Activated B cell treated with CpG ODN at 0.5 μM for 24 hours (primary cell): ENCODE measurements at regions of chr1 and their contacts with region 1.

Region 1: DNA sequence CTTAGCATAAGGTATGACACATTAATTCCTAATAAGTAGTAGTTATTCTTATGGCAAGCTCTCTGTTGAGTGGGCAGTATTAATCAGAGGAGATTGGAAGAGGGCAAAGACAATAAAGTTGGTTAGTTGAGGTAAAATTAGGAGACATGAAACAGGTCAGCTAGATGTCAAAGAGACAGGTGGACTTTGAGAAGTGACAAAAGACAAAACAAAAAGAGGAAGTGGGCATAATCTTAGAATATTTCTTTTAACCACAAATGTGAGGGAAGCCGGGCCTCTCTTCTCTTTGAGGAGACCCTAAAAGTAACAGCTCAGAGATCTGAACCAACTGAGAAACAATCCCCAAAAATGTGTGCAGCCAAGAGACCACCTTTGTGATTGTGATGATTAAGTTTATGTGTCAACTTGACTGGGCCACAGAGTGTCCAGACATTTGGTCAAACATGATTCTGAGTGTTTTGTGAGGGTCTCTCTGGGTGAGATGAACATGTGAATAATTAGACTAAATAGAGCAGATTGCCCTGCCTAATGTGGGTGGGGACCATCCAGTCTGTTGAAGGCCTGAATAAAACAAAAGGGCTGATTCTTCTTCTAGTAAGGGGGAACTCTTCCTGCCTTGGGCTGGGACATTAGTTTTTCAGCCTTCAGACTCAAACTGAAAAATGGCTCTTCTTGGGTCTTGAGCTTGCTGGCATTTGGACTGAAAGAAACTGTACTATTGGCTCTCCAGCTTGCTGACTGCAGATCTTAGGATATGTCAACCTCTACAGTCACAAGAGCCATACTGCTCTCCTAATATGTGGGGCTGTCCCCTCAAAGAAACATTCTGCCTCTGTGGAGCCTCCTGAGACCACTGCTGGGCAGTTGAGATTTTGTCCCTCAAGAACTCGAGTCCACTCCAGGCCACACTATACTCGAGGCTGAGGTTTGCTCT is 40.0 kb downstream of the FCRL5 start:
- DNase-seq: no peak
- ATAC-seq: peak; percentile 47
- H3K4me3 Mint-ChIP-seq: peak overlapping the region; percentile 7
- H3K27ac Mint-ChIP-seq: peak overlapping the region; percentile 38
- H3K4me1 Mint-ChIP-seq: peaks cover 57% of the 10 kb centered on the region
- H3K27me3 Mint-ChIP-seq: no peaks in the 10 kb centered on the region
- CTCF ChIP-seq: no peak

Region 2: GRCh38 chr1:157138220-157139051 is 373.9 kb before region 1 on chr1 and contains the start of gene ETV3:
- CTCF ChIA-PET with region 1: no interaction called
- POLR2A ChIA-PET with region 1: no interaction called
- intact Hi-C with region 1: no loop called
- DNase-seq: peak; percentile 72
- ATAC-seq: peak; percentile 86
- H3K4me3 Mint-ChIP-seq: peak within 1 kb of the TSS; percentile 94
- H3K27ac Mint-ChIP-seq: peak within 1 kb of the TSS; percentile 93
- H3K4me1 Mint-ChIP-seq: peaks cover 43% of the 10 kb centered on the region
- H3K27me3 Mint-ChIP-seq: no peaks in the 10 kb centered on the region
- CTCF ChIP-seq: no peak
- total RNA-seq, gene ETV3: 26.6 and 31.3 TPM in 2 replicates

Region 3: DNA sequence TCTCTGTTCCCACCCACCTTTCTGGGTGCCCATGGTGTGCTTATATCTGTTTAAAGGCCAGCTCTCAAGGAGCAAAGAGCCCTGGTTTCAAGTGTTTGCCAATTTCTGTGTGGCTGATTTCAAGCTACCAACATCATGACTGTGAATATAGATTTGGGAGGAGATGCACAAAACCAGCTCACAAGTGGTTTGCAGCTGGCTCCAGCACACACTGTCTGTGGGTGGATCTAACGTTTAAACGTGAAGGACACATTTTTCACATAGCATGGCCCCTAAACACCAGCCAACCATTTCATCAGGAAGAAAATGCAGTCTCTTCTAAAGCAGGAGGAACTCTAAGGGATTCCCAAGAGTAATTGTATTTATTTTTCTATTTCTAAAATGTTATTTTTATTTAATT is 25.2 kb before region 1 on chr1:
- CTCF ChIA-PET with region 1: no interaction called
- POLR2A ChIA-PET with region 1: no interaction called
- intact Hi-C with region 1: no loop called
- DNase-seq: no peak
- ATAC-seq: no peak
- H3K4me3 Mint-ChIP-seq: no peak overlapping the region
- H3K27ac Mint-ChIP-seq: no peak overlapping the region
- H3K4me1 Mint-ChIP-seq: peaks cover 3% of the 10 kb centered on the region
- H3K27me3 Mint-ChIP-seq: no peaks in the 10 kb centered on the region
- CTCF ChIP-seq: no peak

Region 4: GRCh38 chr1:157523774-157524493 is 11.6 kb after region 1 on chr1:
- CTCF ChIA-PET with region 1: no interaction called
- POLR2A ChIA-PET with region 1: no interaction called
- intact Hi-C with region 1: no loop called
- DNase-seq: no peak
- ATAC-seq: no peak
- H3K4me3 Mint-ChIP-seq: peak overlapping the region; percentile 42
- H3K27ac Mint-ChIP-seq: peak overlapping the region; percentile 62
- H3K4me1 Mint-ChIP-seq: peaks cover 21% of the 10 kb centered on the region
- H3K27me3 Mint-ChIP-seq: no peaks in the 10 kb centered on the region
- CTCF ChIP-seq: no peak

Region 5: GRCh38 chr1:157540160-157540748 is 28.0 kb after region 1 on chr1:
- CTCF ChIA-PET with region 1: no interaction called
- POLR2A ChIA-PET with region 1: no interaction called
- intact Hi-C with region 1: no loop called
- DNase-seq: no peak
- ATAC-seq: no peak
- H3K4me3 Mint-ChIP-seq: peak overlapping the region; percentile 41
- H3K27ac Mint-ChIP-seq: peak overlapping the region; percentile 46
- H3K4me1 Mint-ChIP-seq: peaks cover 47% of the 10 kb centered on the region
- H3K27me3 Mint-ChIP-seq: no peaks in the 10 kb centered on the region
- CTCF ChIP-seq: no peak

Region 6: DNA sequence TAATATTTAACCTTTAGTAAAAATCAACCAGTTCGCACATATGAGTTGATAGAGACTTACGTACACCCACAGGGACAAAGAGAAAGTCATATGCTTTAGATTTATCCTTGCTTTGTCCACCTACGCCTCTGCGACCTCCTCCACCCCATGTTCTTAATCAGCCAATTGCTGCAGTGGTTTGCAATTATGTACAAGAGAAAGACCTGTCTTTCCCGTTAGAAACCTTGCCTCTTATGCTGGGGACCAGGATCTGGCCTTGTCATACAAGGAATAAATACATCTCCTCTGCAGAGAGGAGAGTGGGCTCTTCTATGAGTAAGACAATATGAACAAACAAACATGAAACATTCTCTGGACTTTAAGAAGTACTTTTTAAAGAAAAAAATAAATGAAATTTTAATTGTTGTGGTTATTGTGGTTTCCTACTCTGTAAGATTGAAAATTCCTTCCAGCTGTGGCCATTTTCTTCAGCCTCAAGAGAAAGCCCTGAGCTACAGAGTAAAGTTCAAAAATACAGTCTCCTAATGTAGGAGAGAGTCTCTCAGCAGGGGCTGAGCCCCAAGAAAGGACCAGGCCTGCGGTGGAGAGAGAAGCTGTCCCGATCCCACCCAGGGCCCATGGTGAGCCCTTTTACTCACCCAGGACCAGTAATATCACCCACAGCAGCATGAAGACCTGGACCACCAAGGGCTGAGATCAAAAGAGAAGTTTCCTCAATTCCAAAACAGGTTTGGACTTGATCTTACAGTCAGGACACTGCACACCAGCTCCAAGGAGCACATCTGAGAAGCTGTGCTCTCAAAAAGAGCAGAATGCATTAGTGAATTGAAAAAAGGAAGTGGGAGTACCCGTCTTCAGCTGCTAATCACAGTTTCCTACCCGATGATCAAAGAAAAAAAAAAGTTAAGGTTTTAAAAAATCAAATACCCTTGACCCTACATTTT is 39.7 kb after region 1 on chr1 and contains the start of gene FCRL5:
- CTCF ChIA-PET with region 1: no interaction called
- POLR2A ChIA-PET with region 1: interaction called, 8 read pairs
- intact Hi-C with region 1: loop called (anchors 5 kb)
- DNase-seq: no peak
- ATAC-seq: peak; percentile 87
- H3K4me3 Mint-ChIP-seq: peak within 1 kb of the TSS; percentile 88
- H3K27ac Mint-ChIP-seq: peak within 1 kb of the TSS; percentile 88
- H3K4me1 Mint-ChIP-seq: peaks cover 66% of the 10 kb centered on the region
- H3K27me3 Mint-ChIP-seq: no peaks in the 10 kb centered on the region
- CTCF ChIP-seq: no peak
- total RNA-seq, gene FCRL5: 40.4 and 55.4 TPM in 2 replicates

Region 7: DNA sequence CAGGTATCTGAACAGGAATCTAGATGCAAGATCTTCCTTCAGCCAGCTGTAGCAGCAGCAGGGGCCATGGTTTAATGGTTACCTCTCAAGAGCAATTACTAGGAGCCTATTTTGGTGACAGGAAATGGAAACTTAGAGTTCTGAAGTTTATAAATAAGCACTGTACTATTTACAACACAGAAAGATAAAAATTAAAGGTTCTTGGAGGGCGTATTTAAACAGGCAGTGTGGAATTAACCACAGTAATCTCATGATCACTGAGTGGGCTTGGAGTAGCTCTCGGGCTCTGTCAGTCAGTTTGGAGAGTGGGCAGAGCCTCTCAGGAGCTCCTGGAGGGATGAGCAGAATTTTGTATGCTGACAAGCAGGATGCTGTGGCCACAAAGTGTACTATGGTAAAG is 50.2 kb after region 1 on chr1:
- CTCF ChIA-PET with region 1: no interaction called
- POLR2A ChIA-PET with region 1: interaction called, 3 read pairs
- intact Hi-C with region 1: loop called (anchors 1 kb)
- DNase-seq: no peak
- ATAC-seq: peak; percentile 29
- H3K4me3 Mint-ChIP-seq: peak overlapping the region; percentile 65
- H3K27ac Mint-ChIP-seq: peak overlapping the region; percentile 73
- H3K4me1 Mint-ChIP-seq: peaks cover 70% of the 10 kb centered on the region
- H3K27me3 Mint-ChIP-seq: no peaks in the 10 kb centered on the region
- CTCF ChIP-seq: no peak

Region 8: GRCh38 chr1:158117854-158118704 is 605.8 kb after region 1 on chr1:
- CTCF ChIA-PET with region 1: no interaction called
- POLR2A ChIA-PET with region 1: no interaction called
- intact Hi-C with region 1: loop called (anchors 5 kb)
- DNase-seq: peak; percentile 45
- ATAC-seq: peak; percentile 60
- H3K4me3 Mint-ChIP-seq: peak overlapping the region; percentile 64
- H3K27ac Mint-ChIP-seq: no peak overlapping the region
- H3K4me1 Mint-ChIP-seq: peaks cover 27% of the 10 kb centered on the region
- H3K27me3 Mint-ChIP-seq: peaks cover 20% of the 10 kb centered on the region
- CTCF ChIP-seq: no peak